ENCODE measurements at regions of chr4 and their contacts with region 1.

Region 1: DNA sequence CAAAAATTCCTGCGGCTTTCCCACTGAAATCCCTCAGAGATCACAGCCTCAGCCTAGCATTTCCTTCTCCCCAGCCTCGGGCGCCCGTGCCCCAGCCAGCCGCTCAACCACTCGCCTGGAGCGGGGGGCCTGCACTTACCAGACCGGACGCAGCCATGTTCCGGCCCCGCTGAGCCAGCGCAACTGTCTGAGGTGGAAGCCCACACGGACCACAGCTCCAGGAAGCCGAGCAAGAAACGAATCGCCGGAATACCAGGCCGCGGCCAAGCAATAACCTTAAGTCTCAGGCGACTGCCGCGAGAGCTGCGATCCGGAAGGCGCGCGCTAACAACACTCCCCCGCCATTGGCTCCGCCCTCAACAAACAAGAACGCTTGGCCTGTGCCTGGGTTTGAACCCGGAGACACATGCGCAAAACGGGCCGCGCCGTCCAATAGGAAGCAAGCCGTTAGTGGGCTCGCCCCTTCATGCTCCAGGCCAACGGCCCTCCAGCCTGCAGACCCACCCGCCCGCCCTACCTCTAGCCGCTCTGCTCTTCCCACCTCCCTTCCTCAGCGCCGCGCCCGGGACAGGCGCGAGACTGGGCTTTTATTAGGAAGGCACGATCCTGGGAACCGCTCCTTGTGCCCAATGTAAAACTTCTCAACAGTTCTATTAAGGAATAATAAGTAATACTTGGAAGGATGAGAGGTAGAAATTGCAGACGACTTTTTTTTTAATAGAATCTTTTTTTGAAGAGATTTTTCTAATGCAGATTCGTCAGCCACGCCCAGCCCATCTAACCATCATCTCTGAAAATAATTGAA is at the start of gene CENPC:
- DNase-seq: peak; percentile 95
- H3K4me3 ChIP-seq: peak within 1 kb of the TSS; percentile 60 to 64
- H3K27ac ChIP-seq: peak within 1 kb of the TSS; percentile 82 to 88
- H3K4me1 ChIP-seq: peaks cover 11% of the 10 kb centered on the region
- H3K27me3 ChIP-seq: no peaks in the 10 kb centered on the region
- CTCF ChIP-seq: no peak
- POLR2A ChIP-seq: peak; percentile 84
- total RNA-seq, gene CENPC: 26.4 to 33.2 TPM

Region 2: GRCh38 chr4:66736606-66737005 is 808.8 kb before region 1 on chr4:
- intact Hi-C with region 1: no loop called
- DNase-seq: no peak
- H3K4me3 ChIP-seq: no peak overlapping the region
- H3K27ac ChIP-seq: no peak overlapping the region
- H3K4me1 ChIP-seq: no peaks in the 10 kb centered on the region
- H3K27me3 ChIP-seq: no peaks in the 10 kb centered on the region
- CTCF ChIP-seq: no peak
- POLR2A ChIP-seq: no peak

Region 3: GRCh38 chr4:67700738-67701516 is 155.5 kb after region 1 on chr4 and contains the start of gene UBA6:
- intact Hi-C with region 1: loop called (anchors 5 kb)
- DNase-seq: peak; percentile 97
- H3K4me3 ChIP-seq: peak within 1 kb of the TSS; percentile 83 to 98
- H3K27ac ChIP-seq: peak within 1 kb of the TSS; percentile 92 to 97
- H3K4me1 ChIP-seq: no peaks in the 10 kb centered on the region
- H3K27me3 ChIP-seq: no peaks in the 10 kb centered on the region
- CTCF ChIP-seq: peak in 3 of 4 experiments; percentile 25 to 66 (median 33)
- POLR2A ChIP-seq: peak; percentile 64
- total RNA-seq, gene UBA6: 56.0 to 130 TPM